ENCODE measurements at regions of chr18 and their contacts with region 1.

Region 1: GRCh38 chr18:31990823-31991222 is 27.8 kb upstream of the RNF125 start:
- DNase-seq: no peak
- H3K4me3 ChIP-seq: no peak overlapping the region
- H3K4me3 Mint-ChIP-seq: no peak overlapping the region
- H3K27ac ChIP-seq: no peak overlapping the region
- H3K27ac Mint-ChIP-seq: peak overlapping the region in 1 of 7 donors; percentile 57
- H3K4me1 ChIP-seq: no peaks in the 10 kb centered on the region
- H3K4me1 Mint-ChIP-seq: no peaks in the 10 kb centered on the region
- H3K27me3 ChIP-seq: no peaks in the 10 kb centered on the region
- H3K27me3 Mint-ChIP-seq: no peaks in the 10 kb centered on the region

Region 2: DNA sequence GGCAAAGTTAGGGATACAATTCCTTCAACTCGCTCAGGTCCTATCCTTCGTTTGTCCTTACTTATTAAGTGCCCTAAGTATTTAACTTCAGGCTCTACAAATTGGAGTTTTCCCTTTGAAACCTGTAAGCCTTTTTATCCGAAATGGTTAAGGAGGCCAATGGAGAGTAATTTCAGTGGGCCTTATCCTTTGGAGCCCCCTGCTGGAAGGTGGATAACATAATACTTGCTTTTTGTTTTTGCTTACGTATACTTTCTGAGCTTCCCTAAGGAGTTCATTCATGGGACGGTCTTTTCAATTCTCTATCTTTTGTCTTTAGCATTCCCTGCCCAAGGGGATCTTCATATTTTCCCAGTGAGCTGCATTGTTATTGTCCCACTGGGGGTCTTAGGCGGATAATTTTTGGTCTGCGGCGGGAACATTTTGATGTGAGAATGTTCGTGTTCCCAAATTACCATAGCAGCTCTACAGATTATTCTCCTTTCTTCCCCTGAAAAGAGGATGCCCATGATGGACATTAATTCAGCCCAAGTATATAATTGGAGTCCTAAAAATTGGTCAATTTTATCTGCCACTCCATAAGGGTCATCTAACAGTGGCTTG is 13.5 kb before region 1 on chr18:
- CTCF ChIA-PET with region 1: interaction called, 18 read pairs
- POLR2A ChIA-PET with region 1: no interaction called
- intact Hi-C with region 1: no loop called
- DNase-seq: peak in 4 of 5 donors; percentile 41 to 49 (median 46)
- H3K4me3 ChIP-seq: no peak overlapping the region
- H3K4me3 Mint-ChIP-seq: no peak overlapping the region
- H3K27ac ChIP-seq: no peak overlapping the region
- H3K27ac Mint-ChIP-seq: no peak overlapping the region
- H3K4me1 ChIP-seq: no peaks in the 10 kb centered on the region
- H3K4me1 Mint-ChIP-seq: peaks cover 2 to 9% (median 4%) of the 10 kb centered on the region in 4 donors
- H3K27me3 ChIP-seq: no peaks in the 10 kb centered on the region
- H3K27me3 Mint-ChIP-seq: no peaks in the 10 kb centered on the region

Region 3: DNA sequence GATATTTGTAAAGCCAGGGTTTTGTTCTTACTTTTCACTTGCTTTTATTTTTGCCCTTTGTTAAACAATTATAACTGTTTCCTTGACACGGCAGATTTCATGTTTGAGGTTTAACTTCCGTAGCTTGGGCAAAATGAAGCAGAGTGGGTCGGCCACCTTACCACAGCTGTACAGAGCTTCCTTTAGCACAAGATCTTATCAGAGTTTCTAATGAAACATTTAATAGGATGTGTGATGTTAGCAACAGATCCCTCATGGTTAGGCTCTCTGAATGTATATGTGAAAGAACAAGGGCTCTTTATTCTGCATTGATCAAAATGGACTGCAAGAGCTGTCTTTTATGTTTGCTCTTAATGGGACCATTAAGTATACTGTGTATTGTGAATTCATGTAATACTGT is 50.1 kb after region 1 on chr18:
- CTCF ChIA-PET with region 1: no interaction called
- POLR2A ChIA-PET with region 1: no interaction called
- intact Hi-C with region 1: no loop called
- DNase-seq: peak; percentile 74 to 78 (median 75)
- H3K4me3 ChIP-seq: no peak overlapping the region
- H3K4me3 Mint-ChIP-seq: peak overlapping the region; percentile 55 to 84 (median 70)
- H3K27ac ChIP-seq: peak overlapping the region; percentile 21
- H3K27ac Mint-ChIP-seq: peak overlapping the region; percentile 61 to 92 (median 87)
- H3K4me1 ChIP-seq: peaks cover 75% of the 10 kb centered on the region
- H3K4me1 Mint-ChIP-seq: peaks cover 48 to 75% (median 58%) of the 10 kb centered on the region in 4 donors
- H3K27me3 ChIP-seq: no peaks in the 10 kb centered on the region
- H3K27me3 Mint-ChIP-seq: no peaks in the 10 kb centered on the region